Transverse colon (tissue), 4 donors: ENCODE measurements at regions of chr17 and their contacts with region 1.

Region 1: GRCh38 chr17:77068915-77069314 is 71.9 kb upstream of the SEC14L1 start:
- DNase-seq: no peak
- H3K4me3 ChIP-seq: no peak overlapping the region
- H3K27ac ChIP-seq: no peak overlapping the region
- H3K4me1 ChIP-seq: no peaks in the 10 kb centered on the region
- H3K27me3 ChIP-seq: peaks cover 68% of the 10 kb centered on the region
- CTCF ChIP-seq: no peak
- EP300 ChIP-seq: no peak
- POLR2A ChIP-seq: no peak

Region 2: GRCh38 chr17:76862494-76862893 is 206.4 kb before region 1 on chr17:
- in situ Hi-C with region 1: loop called in 1 of 4 experiments (anchors 5 kb)
- intact Hi-C with region 1: loop called (anchors 5 kb)
- DNase-seq: no peak
- H3K4me3 ChIP-seq: no peak overlapping the region
- H3K27ac ChIP-seq: no peak overlapping the region
- H3K4me1 ChIP-seq: no peaks in the 10 kb centered on the region
- H3K27me3 ChIP-seq: peaks cover 37% of the 10 kb centered on the region
- CTCF ChIP-seq: no peak
- EP300 ChIP-seq: no peak
- POLR2A ChIP-seq: no peak

Region 3: DNA sequence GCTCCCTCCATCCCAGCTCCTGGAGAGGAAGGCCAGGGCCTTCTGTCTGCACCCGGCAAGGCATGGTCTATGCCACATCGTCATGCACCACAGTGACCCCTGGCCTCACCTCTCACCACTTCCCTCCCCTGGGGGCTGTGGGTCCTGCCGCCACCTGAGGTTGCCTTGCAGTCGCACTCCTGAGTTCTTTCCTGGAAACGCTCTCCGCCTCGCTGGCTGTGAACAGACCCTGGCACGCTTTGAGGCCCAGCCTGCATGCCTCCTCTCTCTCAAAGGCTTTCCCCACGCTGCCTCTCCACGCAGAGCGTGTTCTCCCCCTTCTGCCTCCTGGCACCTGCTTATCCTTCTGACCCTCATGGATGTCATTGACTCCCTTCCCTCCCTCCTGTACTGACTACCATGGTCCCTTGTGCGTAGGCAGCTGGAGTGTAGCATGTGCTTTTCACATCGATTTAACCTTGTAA is 117.3 kb after region 1 on chr17:
- in situ Hi-C with region 1: no loop called
- intact Hi-C with region 1: no loop called
- DNase-seq: no peak
- H3K4me3 ChIP-seq: no peak overlapping the region
- H3K27ac ChIP-seq: peak overlapping the region in 1 of 4 donors; percentile 3
- H3K4me1 ChIP-seq: peaks cover 0 to 18% (median under 1%) of the 10 kb centered on the region in 4 donors
- H3K27me3 ChIP-seq: no peaks in the 10 kb centered on the region
- CTCF ChIP-seq: no peak
- EP300 ChIP-seq: no peak
- POLR2A ChIP-seq: no peak

Region 4: DNA sequence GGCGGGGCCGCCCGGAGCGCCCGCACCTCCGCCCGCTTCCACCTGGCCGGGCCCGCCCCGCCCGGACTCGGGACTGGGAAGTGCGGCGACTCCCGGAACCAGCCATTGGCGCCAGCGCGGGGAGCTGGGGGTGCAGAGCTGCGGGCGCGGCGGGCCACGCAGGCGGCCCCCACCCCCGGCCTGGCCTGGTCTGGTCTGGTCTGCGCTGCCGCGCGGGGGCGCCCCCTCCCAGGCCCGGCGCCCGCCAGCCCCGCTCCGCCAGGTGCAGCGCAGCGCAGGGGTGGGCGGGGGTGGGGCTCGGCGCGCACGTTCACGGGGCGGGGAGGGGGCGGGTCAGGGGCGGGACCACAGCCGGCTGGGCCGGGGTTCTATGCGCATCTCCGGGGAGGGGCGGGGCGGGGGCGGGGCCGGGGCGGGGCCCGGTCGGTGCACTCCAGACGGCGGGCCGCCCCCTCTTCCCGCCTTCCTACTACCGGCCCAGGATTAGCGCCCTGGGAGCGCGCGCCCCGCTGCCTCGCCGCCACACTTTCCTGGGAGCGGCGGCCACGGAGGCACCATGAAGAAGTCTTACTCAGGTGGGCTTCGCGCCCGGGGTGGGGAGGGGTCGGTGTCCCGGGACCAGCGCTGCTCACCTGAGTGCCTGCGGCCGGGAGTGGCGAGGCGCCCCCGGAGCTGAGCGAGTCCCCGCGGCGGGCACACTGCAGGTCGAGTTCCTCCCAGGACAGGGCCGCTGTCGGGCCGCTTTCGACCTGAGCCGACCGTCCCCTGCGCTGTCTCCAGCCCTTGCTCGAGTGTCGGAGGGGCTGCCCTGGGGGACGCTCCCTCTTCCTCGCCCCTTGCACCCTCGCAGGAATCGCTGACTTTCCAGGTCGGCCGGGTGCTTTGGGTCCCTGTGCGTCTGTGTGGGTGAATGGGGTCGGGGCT is 212.3 kb after region 1 on chr17:
- in situ Hi-C with region 1: no loop called
- intact Hi-C with region 1: no loop called
- DNase-seq: peak; percentile 73
- H3K4me3 ChIP-seq: peak overlapping the region; percentile 21 to 68 (median 56)
- H3K27ac ChIP-seq: peak overlapping the region; percentile 63 to 87 (median 82)
- H3K4me1 ChIP-seq: peaks cover 14 to 51% (median 44%) of the 10 kb centered on the region in 4 donors
- H3K27me3 ChIP-seq: peaks cover 6% of the 10 kb centered on the region
- CTCF ChIP-seq: peak in 2 of 5 experiments; percentile 24 to 25
- EP300 ChIP-seq: no peak
- POLR2A ChIP-seq: peak; percentile 65